ENCODE measurements at regions of chr10 and their contacts with region 1.

Region 1: DNA sequence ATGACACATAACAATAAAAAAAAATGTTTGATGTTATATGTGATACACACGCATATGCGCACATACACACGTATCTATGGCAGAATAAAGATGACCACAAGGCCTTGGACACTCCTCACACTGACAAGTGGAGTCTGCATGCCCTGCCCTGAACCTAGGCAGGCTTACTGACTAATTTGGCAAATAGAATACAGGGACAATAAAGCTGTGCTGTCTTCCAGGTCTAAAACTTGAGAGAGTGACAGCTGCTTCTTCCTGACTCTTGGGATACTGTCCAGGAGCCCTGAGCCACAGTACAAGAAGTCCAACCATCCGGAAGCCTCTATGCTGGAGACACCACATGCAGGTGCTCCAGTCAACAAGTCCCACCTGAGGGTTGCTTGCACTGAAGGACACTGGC is 20.3 kb downstream of the PARD3 start:
- DNase-seq: no peak
- H3K4me3 Mint-ChIP-seq: no peak overlapping the region
- H3K27ac Mint-ChIP-seq: no peak overlapping the region
- H3K4me1 Mint-ChIP-seq: no peaks in the 10 kb centered on the region
- H3K27me3 Mint-ChIP-seq: peaks cover 3% of the 10 kb centered on the region

Region 2: DNA sequence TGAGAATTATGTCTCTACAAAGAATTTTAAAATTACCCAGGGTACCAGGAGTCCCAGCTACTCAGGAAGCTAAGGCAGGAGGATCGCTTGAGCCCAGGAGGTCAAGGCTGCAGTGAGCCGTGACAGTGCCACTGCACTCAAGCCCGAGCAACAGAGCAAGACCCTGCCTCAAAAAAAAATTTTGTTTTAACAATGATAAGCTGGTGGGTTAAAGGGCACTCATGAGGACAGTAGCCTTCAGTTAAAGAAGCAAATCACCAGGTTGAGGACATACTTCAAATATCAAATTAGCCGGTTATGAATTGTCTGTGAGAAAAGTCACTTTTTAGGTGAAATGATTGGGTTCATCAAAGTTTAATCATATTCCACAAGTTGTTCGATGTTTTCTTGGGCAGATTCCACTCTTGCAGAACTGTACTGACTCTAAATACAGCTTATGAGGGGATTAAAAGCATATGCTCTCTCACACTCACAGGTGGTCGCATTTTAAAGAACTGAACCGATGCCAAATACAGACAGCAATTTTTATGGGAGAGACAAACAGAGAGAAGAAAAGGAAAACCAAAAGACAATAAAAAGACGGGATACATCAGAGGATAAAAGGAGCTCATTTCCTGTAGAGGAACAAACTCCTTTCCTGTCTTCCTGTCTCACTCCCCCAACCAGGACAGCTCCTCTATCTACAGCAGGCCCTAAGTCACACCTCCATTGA is 877.6 kb before region 1 on chr10:
- intact Hi-C with region 1: no loop called
- DNase-seq: no peak
- H3K4me3 Mint-ChIP-seq: no peak overlapping the region
- H3K27ac Mint-ChIP-seq: no peak overlapping the region
- H3K4me1 Mint-ChIP-seq: no peaks in the 10 kb centered on the region
- H3K27me3 Mint-ChIP-seq: no peaks in the 10 kb centered on the region

Region 3: DNA sequence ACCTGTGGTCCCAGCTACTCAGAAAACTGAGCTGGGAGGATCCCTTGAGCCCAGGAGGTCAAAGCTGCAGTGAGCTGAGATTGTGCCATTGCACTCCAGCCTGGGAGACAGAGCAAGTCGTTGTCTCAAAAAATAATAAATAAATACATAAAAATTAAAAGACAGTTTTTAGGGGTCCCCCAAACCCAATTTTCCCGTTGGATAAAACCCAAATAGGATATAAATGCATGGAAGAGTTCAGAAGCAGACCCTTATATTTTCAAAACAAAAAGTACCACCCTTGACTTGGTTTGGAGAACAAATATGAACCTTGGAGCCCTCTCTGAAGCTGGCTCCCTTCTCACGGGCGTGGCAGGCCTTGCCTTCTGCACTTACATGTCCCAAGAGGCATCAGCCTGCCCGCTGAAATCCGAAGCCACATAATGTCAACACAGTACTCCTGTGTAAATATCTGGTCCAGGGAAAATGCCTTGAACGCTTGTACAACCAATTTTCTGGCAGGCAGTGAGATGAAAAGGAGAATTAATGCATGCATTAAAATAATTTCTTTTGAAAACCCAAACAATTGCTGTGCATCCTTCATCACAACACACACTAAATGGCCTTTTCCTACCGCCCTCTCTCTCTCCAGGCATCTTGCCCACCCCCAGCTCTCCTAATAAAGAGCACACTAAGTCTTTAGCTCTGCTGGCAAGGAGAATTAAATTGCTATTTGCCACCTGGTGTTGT is 66.6 kb after region 1 on chr10:
- intact Hi-C with region 1: loop called (anchors 2 kb)
- DNase-seq: no peak
- H3K4me3 Mint-ChIP-seq: no peak overlapping the region
- H3K27ac Mint-ChIP-seq: no peak overlapping the region
- H3K4me1 Mint-ChIP-seq: no peaks in the 10 kb centered on the region
- H3K27me3 Mint-ChIP-seq: no peaks in the 10 kb centered on the region